Calu3 (cell line): ENCODE measurements at regions of chr20 and their contacts with region 1.

Region 1: GRCh38 chr20:33262658-33263065 is 20.4 kb upstream of the BPIFB1 start:
- DNase-seq: peak; percentile 81
- H3K4me3 Mint-ChIP-seq: no peak overlapping the region
- H3K27ac Mint-ChIP-seq: peak overlapping the region; percentile 24
- H3K4me1 Mint-ChIP-seq: peaks cover 16% of the 10 kb centered on the region
- H3K27me3 Mint-ChIP-seq: no peaks in the 10 kb centered on the region
- CTCF ChIP-seq: peak; percentile 87

Region 2: DNA sequence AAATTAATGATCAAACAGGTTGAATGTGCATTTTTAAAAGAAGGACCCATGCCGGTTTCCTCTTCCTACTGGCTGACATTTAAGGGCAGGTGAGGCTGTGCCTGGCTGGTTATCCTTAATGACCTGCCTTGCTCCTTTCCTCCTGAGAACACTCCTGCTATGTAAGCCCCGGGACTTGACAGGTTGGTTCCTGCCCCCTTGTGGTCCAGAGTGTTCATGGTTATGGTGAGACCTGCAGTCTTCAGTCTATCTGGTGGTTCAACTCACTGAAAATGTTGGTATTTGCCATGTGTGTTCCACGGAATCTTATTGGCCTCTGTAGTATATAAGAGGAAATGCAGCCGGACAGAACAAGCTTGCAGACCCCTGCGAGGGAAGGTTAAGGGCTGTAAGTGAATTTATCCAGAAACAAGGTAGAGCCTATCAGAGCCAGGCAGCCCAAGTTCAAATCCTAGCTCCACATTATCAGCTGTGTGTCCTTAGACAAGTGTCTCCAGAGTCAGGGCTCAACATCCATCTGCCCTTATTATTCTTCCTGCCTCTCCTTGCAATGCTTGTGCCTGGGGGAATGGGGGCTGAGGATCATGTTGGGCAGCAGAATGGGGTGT is 50.7 kb before region 1 on chr20:
- CTCF ChIA-PET with region 1: interaction called, 14 read pairs
- intact Hi-C with region 1: no loop called
- DNase-seq: peak; percentile 85
- H3K4me3 Mint-ChIP-seq: no peak overlapping the region
- H3K27ac Mint-ChIP-seq: no peak overlapping the region
- H3K4me1 Mint-ChIP-seq: peaks cover 8% of the 10 kb centered on the region
- H3K27me3 Mint-ChIP-seq: peaks cover 100% of the 10 kb centered on the region
- CTCF ChIP-seq: peak; percentile 72

Region 3: DNA sequence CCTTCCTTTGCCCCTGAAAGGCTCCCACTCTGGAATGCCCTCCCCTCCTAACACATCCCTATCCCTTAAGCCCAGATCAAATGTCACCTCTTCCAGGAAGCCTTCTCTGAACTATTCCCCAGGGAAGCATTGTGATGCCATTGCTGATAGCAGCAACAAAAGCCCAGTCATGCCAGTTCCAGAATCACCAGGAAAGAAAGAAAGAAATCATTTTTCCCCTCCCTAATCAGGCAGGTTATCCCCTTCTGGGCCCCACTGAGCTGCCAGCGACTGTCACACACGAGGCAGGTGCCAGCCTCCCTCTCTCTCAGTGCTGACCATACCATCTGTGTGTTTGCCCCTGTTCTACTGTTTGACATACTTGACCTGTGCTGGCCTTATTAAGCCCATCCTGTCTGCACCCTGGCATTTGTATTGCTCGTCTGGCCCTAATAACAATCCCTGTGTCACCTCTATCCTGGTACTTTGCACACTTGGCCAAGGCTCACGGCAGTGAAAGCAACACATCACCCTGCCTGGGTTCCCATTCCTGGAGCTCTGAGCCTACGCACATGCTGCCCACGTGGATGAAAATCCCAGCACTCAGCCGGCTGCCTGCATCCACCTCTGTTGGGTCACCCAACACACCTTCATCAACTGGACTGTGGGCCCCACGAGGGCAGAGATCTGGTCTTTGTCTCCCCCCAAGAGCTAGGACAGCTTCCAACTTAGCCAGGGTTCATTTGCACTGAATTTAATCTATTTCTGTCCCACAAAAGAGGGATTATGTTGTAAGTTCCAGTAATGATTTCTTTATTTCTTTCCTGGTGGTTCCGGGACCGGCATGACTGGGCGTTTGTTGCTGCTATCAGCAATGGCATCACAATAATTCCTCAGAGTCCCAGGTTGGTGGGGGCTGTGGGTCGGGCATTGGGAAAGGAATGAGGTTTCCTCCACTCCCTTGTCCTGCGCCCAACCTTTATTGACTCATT is 15.1 kb after region 1 on chr20:
- CTCF ChIA-PET with region 1: interaction called, 21 read pairs
- intact Hi-C with region 1: loop called (anchors 2 kb)
- DNase-seq: peak; percentile 95
- H3K4me3 Mint-ChIP-seq: peak overlapping the region; percentile 13
- H3K27ac Mint-ChIP-seq: peak overlapping the region; percentile 98
- H3K4me1 Mint-ChIP-seq: peaks cover 77% of the 10 kb centered on the region
- H3K27me3 Mint-ChIP-seq: no peaks in the 10 kb centered on the region
- CTCF ChIP-seq: no peak

Region 4: GRCh38 chr20:33284238-33284637 is 21.6 kb after region 1 on chr20:
- CTCF ChIA-PET with region 1: interaction called, 21 read pairs
- intact Hi-C with region 1: loop called (anchors 2 kb)
- DNase-seq: no peak
- H3K4me3 Mint-ChIP-seq: no peak overlapping the region
- H3K27ac Mint-ChIP-seq: no peak overlapping the region
- H3K4me1 Mint-ChIP-seq: peaks cover 50% of the 10 kb centered on the region
- H3K27me3 Mint-ChIP-seq: peaks cover 39% of the 10 kb centered on the region
- CTCF ChIP-seq: no peak

Region 5: DNA sequence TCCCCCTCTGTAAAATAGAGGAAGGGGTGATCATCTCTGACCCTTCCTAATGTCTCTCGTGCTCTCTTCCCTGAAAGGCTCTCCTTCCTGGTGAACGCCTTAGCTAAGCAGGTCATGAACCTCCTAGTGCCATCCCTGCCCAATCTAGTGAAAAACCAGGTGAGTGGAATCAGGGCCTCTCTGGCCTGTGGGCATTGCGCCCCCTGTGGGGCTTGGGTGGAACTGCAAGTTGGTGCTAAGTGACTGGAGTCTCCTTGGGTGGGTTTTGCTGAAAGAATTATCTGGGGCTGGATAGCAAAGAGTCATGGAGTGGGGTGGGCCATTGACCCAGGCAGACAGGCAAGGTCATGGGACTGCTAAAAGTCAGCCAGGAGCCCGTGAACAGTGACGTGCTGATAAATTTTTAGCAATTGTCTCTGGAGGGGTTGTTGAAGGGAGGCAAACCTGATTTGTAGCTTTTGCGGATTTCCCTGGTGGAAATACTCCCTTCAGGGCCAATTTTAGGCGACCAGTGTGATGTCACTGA is 29.2 kb after region 1 on chr20:
- CTCF ChIA-PET with region 1: interaction called, 48 read pairs
- intact Hi-C with region 1: no loop called
- DNase-seq: peak; percentile 86
- H3K4me3 Mint-ChIP-seq: no peak overlapping the region
- H3K27ac Mint-ChIP-seq: no peak overlapping the region
- H3K4me1 Mint-ChIP-seq: peaks cover 8% of the 10 kb centered on the region
- H3K27me3 Mint-ChIP-seq: peaks cover 23% of the 10 kb centered on the region
- CTCF ChIP-seq: peak; percentile 100

Region 6: GRCh38 chr20:33299111-33299603 is 36.5 kb after region 1 on chr20:
- CTCF ChIA-PET with region 1: interaction called, 48 read pairs
- intact Hi-C with region 1: loop called (anchors 1 kb)
- DNase-seq: peak; percentile 93
- H3K4me3 Mint-ChIP-seq: peak overlapping the region; percentile 10
- H3K27ac Mint-ChIP-seq: no peak overlapping the region
- H3K4me1 Mint-ChIP-seq: peaks cover 5% of the 10 kb centered on the region
- H3K27me3 Mint-ChIP-seq: peaks cover 63% of the 10 kb centered on the region
- CTCF ChIP-seq: peak; percentile 99